Activated CD8-positive, alpha-beta T cell treated with anti-CD3 and anti-CD28 coated beads, Interleukin-2, amount 10 ng/mL, durations not matched to agents 7 days and 5 days (primary cell): ENCODE measurements at regions of chr7 and their contacts with region 1.

Region 1: DNA sequence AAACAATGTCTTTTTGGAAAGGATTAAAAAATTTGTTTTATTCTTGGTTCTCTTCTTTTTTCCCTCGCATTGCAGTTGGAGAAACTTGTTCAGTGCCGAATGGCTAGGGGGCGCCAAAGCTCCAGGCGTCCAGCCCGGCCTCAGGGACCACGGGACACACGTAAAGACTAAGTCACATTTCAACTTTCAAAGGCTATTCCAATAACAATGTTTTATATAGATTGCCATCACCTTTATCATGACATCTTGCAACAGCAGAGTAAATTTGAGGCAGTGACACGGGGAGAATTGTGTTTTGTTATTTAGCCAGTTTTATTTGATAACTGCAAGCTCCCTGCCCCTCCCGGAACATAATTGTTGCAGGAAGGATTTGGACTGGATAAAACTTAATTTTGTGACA is 2.2 kb upstream of the IGFBP3 start:
- DNase-seq: peak; percentile 71
- ATAC-seq: peak; percentile 45
- H3K4me3 Mint-ChIP-seq: peak overlapping the region; percentile 49
- H3K27ac Mint-ChIP-seq: peak overlapping the region; percentile 24
- H3K4me1 Mint-ChIP-seq: peaks cover 35% of the 10 kb centered on the region
- H3K27me3 Mint-ChIP-seq: peaks cover 50% of the 10 kb centered on the region

Region 2: DNA sequence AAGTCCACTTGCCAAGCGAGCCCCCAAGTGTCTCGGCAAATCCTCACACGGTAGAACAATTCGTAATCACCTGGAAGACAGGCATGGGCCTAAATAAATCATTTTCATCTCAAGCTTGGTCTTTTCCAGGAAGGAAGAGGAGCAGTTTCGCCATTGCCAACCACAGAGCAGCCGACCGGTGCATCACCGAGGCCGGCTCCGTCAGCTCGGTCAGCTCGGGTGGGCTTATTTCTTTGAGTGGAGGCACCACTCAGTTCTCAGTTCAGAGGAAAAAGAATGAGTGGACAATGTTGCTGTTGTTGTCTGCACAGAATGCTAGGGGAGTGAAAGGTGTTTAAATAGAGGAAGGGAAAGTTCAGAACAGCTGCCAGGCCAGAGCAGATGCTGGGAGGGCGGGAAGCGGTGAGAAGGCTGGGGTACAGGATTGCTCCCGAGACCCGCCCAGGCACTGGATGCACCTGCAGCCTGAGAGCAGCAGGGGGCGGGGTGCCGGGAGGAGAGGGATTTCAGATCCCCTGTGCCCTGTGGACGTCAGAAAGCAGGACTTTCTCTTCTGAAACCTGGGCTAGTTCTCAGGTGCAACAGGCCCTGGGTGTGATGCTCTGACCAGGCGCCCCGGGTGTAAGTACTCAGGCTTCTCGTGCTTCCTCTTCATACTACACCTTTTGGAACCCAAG is 15.5 kb after region 1 on chr7:
- CTCF ChIA-PET with region 1: interaction called, 13 read pairs
- POLR2A ChIA-PET with region 1: interaction called, 3 read pairs
- DNase-seq: no peak
- ATAC-seq: no peak
- H3K4me3 Mint-ChIP-seq: no peak overlapping the region
- H3K27ac Mint-ChIP-seq: no peak overlapping the region
- H3K4me1 Mint-ChIP-seq: peaks cover 24% of the 10 kb centered on the region
- H3K27me3 Mint-ChIP-seq: peaks cover 14% of the 10 kb centered on the region

Region 3: DNA sequence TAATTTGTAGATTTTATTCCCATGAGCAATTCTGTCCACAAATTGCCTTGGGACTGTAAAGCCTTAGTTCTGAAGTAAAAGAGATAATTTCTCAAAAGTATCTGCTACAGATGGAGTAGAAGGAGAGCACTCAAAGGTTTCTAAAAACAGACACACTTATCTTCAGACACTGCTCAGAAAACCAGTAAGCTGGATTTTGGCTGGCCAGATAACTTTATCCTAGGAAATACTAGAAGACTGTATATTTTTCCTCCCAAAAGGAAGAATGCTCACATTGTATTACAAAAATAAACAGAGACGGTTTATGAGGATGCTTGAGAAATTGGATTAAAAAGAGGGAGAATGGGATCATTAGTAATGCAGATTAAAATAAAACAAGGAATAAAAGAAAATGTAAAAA is 175.8 kb after region 1 on chr7:
- CTCF ChIA-PET with region 1: no interaction called
- POLR2A ChIA-PET with region 1: no interaction called
- DNase-seq: no peak
- ATAC-seq: no peak
- H3K4me3 Mint-ChIP-seq: no peak overlapping the region
- H3K27ac Mint-ChIP-seq: no peak overlapping the region
- H3K4me1 Mint-ChIP-seq: no peaks in the 10 kb centered on the region
- H3K27me3 Mint-ChIP-seq: no peaks in the 10 kb centered on the region

Region 4: DNA sequence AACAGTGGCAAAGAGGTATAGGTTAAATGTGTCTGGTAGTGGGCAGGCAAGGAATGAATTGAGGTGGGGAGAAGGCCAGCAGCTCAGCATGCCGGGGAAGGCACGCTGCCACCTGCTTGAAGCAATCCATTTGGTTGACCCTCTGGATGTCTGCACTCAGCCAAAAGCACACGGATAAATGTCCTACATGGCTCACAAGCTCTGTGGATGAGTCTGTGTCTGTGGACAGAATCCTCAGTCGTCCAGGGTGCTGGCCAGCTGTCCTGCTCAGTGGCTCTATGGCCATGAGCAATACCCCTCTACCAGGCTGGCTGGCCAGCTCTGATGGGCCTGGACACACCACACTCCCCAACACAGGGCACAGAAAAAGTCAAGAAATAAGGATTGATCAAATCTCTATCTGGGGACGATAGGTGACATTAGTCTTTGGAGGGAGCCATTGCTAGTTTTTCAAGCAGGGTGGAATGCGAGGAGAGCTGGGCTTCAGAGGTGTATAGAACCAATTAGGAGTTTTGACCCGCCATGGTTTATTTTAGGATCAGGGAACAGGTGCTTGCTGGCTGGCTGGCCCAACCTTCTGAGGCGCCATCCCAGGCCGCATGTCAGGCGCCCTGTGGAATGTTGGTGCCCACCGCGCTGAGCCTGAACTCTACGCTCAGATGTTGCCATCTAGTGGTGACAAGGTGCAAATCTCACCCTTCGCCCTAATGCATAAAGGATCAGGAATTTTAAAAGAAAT is 1165.2 kb after region 1 on chr7:
- CTCF ChIA-PET with region 1: interaction called, 22 read pairs
- POLR2A ChIA-PET with region 1: no interaction called
- DNase-seq: peak; percentile 30
- ATAC-seq: no peak
- H3K4me3 Mint-ChIP-seq: no peak overlapping the region
- H3K27ac Mint-ChIP-seq: no peak overlapping the region
- H3K4me1 Mint-ChIP-seq: no peaks in the 10 kb centered on the region
- H3K27me3 Mint-ChIP-seq: no peaks in the 10 kb centered on the region